ENCODE measurements at regions of chr1 and their contacts with region 1.

Region 1: DNA sequence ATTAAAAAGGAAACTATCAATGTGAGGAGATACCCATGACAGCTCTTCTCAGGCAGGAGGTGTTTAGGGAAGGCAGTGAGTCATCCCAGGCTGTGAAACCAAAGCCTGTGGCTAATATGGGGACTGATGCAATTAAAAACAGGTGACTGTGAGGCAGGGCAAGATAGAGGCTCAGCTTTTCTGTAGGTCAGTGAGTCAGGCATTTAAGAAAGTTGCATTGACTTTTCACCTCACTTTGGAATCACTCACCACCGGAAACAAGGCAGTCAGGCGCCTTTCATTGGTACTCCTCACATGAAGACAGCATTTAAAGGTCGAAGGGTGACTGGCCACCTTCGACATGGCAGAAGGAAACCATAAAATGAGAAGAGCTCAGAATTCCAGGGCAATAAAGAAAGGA is 54.5 kb downstream of the PAPPA2 start:
- DNase-seq: peak; percentile 84
- H3K4me3 ChIP-seq: no peak overlapping the region
- H3K27ac ChIP-seq: no peak overlapping the region
- H3K4me1 ChIP-seq: peaks cover 18% of the 10 kb centered on the region
- H3K27me3 ChIP-seq: peaks cover 4% of the 10 kb centered on the region
- CTCF ChIP-seq: no peak

Region 2: GRCh38 chr1:176444286-176444685 is 73.2 kb before region 1 on chr1:
- CTCF ChIA-PET with region 1: no interaction called
- dilution Hi-C with region 1: no loop called
- in situ Hi-C with region 1: no loop called
- intact Hi-C with region 1: loop called (anchors 5 kb)
- DNase-seq: no peak
- H3K4me3 ChIP-seq: no peak overlapping the region
- H3K27ac ChIP-seq: no peak overlapping the region
- H3K4me1 ChIP-seq: peaks cover 11% of the 10 kb centered on the region
- H3K27me3 ChIP-seq: no peaks in the 10 kb centered on the region
- CTCF ChIP-seq: peak; percentile 4 to 51

Region 3: DNA sequence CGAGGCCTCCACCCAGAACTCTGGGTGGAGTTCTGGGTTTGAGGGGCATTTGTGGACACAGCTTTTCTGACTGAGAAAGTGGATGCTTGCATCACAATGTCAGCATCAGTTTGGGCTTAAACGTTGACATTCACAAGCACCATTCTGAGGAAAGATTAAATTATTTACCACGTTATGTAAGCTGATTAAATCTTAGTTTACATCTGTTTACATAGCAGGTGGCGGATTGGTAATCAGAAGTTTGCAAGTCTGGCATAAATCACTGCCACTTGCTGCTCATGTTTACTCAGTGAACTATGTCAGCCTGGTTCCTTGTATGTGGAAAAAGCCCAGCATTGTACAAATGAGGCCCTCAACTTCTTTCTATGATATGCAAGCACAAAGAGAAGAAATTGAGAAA is 255.6 kb after region 1 on chr1:
- CTCF ChIA-PET with region 1: no interaction called
- dilution Hi-C with region 1: no loop called
- in situ Hi-C with region 1: no loop called
- intact Hi-C with region 1: no loop called
- DNase-seq: no peak
- H3K4me3 ChIP-seq: no peak overlapping the region
- H3K27ac ChIP-seq: no peak overlapping the region
- H3K4me1 ChIP-seq: no peaks in the 10 kb centered on the region
- H3K27me3 ChIP-seq: no peaks in the 10 kb centered on the region
- CTCF ChIP-seq: no peak